ENCODE measurements at regions of chr17 and their contacts with region 1.

Region 1: DNA sequence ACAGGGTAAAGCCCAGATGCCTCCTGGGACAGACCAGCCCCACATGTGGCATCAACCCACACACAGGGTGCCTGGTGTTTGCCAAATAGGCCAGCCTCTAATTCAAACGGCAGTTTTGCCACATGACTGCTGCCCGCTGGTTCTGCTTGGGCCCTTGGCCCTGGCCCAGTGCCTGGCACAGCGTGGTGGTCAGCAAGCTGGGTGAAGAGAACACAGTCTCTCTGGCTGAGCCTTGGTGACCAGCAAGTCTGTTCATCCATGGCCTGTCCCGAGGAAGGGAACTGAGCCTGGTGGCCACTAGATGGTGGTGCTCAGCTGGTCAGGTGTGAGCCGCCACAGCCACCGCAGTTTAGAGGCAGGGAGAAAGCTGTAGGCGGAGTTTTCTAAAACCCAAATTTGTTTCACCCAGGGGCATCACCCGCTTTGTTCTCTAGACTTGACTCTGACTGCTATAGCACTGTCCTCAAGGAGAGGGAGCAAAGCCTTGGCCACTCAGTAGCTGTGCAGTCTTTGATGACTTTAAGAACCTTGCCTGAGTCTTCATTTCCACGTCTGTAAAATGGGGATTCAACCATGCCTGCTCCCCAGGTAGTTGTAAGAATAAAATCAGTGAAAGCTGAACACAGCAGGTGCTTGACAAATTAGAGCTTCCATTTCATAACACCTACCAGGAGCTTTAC is 4.7 kb upstream of the GFAP start:
- DNase-seq: peak; percentile 82 to 93 (median 90)
- ATAC-seq: peak; percentile 88 to 89
- H3K4me3 ChIP-seq: no peak overlapping the region
- H3K27ac ChIP-seq: no peak overlapping the region
- H3K4me1 ChIP-seq: peaks cover 2% of the 10 kb centered on the region
- H3K27me3 ChIP-seq: no peaks in the 10 kb centered on the region

Region 2: DNA sequence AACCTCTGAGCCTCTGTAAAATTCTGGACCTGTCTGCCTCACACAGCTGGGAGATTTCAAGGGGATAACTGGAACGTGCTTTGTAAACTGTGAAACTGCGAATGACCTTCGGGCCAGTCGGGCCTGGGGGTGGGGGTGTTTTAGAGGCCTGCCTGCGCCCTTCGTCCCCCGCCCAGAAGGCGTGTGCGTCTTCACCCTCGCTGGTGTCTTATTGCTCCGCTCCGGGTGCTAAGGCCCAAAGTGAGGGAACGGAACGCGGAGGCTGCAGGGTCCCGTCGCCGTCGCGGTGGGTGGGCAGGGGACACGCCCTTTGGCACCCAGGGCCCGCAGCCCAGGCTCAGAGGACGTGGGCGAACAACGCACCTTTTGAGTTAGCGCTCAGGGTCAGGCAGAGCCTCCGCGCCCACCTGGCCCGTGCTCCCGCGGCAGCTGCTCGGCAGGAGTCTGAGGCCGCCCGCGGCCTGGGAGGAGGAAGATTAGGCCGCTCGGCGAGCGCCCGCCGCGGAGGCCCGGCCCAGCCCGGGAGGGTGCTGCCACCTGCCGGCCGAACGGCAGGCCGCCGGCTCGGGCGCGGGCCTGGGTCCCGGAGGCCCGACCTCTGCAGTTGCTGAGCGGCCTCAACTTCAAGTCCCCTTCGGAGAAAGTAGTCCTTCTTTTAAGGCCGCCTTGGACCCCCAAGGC is 101.7 kb after region 1 on chr17:
- intact Hi-C with region 1: loop called (anchors 2 to 5 kb)
- DNase-seq: peak; percentile 69 to 91 (median 89)
- ATAC-seq: peak; percentile 83 to 85
- H3K4me3 ChIP-seq: peak overlapping the region; percentile 2
- H3K27ac ChIP-seq: peak overlapping the region; percentile 5
- H3K4me1 ChIP-seq: peaks cover 17% of the 10 kb centered on the region
- H3K27me3 ChIP-seq: no peaks in the 10 kb centered on the region

Region 3: GRCh38 chr17:45098869-45099616 is 179.0 kb after region 1 on chr17:
- intact Hi-C with region 1: loop called (anchors 2 to 10 kb)
- DNase-seq: peak; percentile 86 to 96 (median 95)
- ATAC-seq: peak; percentile 77 to 84
- H3K4me3 ChIP-seq: no peak overlapping the region
- H3K27ac ChIP-seq: no peak overlapping the region
- H3K4me1 ChIP-seq: peaks cover 4% of the 10 kb centered on the region
- H3K27me3 ChIP-seq: no peaks in the 10 kb centered on the region

Region 4: DNA sequence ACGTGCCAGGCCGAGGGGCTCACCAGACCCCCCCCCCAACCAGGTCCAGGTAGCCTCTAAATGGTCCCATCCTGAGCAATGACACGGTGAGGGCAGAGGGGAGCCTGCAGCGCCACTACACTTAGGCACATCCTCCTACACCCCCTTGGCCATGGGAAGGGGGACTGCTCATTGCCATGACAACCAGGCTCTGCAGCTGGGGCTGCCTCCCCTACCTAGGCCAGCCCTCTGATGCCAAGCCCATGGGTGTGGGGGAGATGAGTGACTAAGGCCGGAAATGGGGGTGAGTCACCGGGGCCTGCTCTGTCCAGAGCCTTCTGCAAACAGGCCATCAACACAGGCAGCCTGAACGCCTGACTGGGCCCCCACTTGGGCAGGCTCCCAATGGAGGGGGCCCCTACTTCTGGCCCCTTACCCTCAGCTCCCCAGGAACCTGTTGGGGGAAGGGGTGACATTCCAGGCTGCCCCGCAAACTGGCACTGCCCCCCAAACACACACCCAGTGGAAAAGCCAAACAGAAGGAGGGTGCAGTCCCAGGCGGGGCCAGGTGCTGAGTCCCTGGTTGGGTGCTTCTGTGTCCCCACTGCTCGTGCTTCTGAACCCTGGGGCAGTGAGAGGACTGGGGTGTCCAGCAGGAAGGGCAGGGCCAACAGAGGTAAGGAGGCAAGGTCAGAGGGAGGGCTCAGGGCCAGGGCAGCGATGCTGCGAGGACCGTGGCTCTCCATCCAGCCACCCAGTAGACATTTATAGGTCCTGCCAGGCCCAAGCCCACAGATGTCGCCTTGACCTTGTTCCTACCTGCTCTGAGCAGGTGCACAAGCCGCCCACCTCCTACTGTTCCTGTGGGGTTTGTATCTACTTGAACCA is 204.1 kb after region 1 on chr17:
- intact Hi-C with region 1: loop called in 2 of 4 experiments (anchors 10 kb)
- DNase-seq: peak; percentile 75 to 78 (median 77)
- ATAC-seq: peak; percentile 38 to 78
- H3K4me3 ChIP-seq: no peak overlapping the region
- H3K27ac ChIP-seq: no peak overlapping the region
- H3K4me1 ChIP-seq: peaks cover 8% of the 10 kb centered on the region
- H3K27me3 ChIP-seq: no peaks in the 10 kb centered on the region

Region 5: GRCh38 chr17:45197555-45198334 is 277.7 kb after region 1 on chr17:
- intact Hi-C with region 1: loop called in 1 of 4 experiments (anchors 5 kb)
- DNase-seq: peak; percentile 93 to 97 (median 96)
- ATAC-seq: peak; percentile 97
- H3K4me3 ChIP-seq: no peak overlapping the region
- H3K27ac ChIP-seq: no peak overlapping the region
- H3K4me1 ChIP-seq: peaks cover 3% of the 10 kb centered on the region
- H3K27me3 ChIP-seq: no peaks in the 10 kb centered on the region

Region 6: GRCh38 chr17:45573924-45574770 is 654.1 kb after region 1 on chr17:
- intact Hi-C with region 1: no loop called
- DNase-seq: no peak
- ATAC-seq: no peak
- H3K4me3 ChIP-seq: no peak overlapping the region
- H3K27ac ChIP-seq: no peak overlapping the region
- H3K4me1 ChIP-seq: no peaks in the 10 kb centered on the region
- H3K27me3 ChIP-seq: no peaks in the 10 kb centered on the region

Measured in right cardiac atrium (tissue), 5 donors.